CD4-positive, alpha-beta memory T cell (primary cell): ENCODE measurements at regions of chr11 and their contacts with region 1.

Region 1: DNA sequence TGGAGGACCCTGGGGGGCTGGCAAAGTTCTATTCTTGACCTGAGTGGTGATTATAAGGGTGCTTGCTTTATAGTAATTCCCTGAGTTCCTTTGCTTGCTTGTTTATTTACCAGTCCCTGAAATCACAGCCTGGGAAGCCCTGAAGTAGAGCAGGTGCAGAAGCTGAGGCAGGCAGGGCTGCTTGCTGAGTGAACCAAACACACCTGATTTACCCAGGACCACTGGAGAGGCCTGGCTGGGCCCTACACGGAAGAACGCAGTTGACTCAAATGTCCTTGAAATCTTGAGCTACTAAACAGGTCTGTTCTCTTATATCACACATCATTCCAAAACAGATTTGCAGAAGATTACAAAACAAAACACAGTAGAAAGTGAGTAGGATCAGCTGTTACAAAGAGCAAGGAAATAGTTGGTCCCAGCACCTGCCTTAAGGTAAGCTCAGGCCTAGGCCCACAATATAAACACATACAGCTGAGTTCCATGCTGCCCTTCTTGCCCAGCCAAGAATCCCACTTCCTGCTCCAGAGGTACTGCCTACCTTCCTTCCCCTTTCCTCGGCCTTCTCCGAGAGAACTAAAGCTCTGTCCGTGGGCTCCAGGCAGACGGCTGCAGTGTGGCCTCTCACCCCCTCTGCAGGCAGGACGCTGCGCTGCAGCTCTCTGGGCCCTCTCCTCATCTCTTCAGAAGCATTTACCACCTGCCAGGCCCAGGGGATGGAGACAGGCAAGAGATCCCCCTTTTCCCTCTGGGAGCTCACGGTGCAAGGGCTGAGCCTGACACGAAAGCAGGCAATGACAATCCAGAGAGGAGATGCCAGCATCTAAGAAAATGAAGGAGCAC is 46.1 kb upstream of the SCUBE2 start:
- DNase-seq: peak; percentile 51 to 54 (median 54)
- H3K4me3 ChIP-seq: no peak overlapping the region
- H3K4me3 Mint-ChIP-seq: peak overlapping the region in 6 of 8 donors; percentile 50 to 80 (median 54)
- H3K27ac ChIP-seq: no peak overlapping the region
- H3K27ac Mint-ChIP-seq: peak overlapping the region in 6 of 7 donors; percentile 15 to 90 (median 64)
- H3K4me1 ChIP-seq: peaks cover 26% of the 10 kb centered on the region
- H3K4me1 Mint-ChIP-seq: peaks cover 11 to 36% (median 21%) of the 10 kb centered on the region in 4 donors
- H3K27me3 ChIP-seq: no peaks in the 10 kb centered on the region
- H3K27me3 Mint-ChIP-seq: no peaks in the 10 kb centered on the region

Region 2: DNA sequence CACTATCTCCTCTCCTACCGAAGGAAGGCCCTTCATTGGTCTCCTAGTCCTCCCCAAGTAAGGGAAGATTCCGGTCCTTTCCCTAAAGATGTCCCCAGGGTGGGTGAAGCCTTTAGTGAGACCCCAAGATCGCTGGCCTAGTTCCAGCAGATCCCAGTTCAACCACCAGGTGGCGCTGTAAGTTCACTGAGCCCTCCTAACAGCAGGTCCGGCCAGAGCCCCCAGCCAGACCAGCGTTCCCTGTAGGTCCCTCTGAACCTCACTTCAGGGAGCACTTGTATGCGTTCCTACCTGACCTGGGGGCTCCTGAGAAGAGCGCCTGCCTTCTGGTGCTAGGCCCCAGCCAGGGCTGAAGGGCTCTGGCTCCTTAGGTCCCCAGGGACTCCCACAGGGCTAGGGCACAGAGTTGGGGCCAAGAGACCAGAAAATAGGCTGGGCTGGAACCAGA is 911.9 kb before region 1 on chr11:
- CTCF ChIA-PET with region 1: no interaction called
- POLR2A ChIA-PET with region 1: no interaction called
- intact Hi-C with region 1: loop called (anchors 5 kb)
- DNase-seq: peak in 4 of 5 donors; percentile 35 to 52 (median 36)
- H3K4me3 ChIP-seq: no peak overlapping the region
- H3K4me3 Mint-ChIP-seq: no peak overlapping the region
- H3K27ac ChIP-seq: no peak overlapping the region
- H3K27ac Mint-ChIP-seq: no peak overlapping the region
- H3K4me1 ChIP-seq: no peaks in the 10 kb centered on the region
- H3K4me1 Mint-ChIP-seq: peaks cover 0 to 2% (median under 1%) of the 10 kb centered on the region in 4 donors
- H3K27me3 ChIP-seq: no peaks in the 10 kb centered on the region
- H3K27me3 Mint-ChIP-seq: peaks cover 0 to 4% of the 10 kb centered on the region in 2 donors

Region 3: GRCh38 chr11:8911029-8911826 is 226.3 kb before region 1 on chr11 and contains the start of gene AKIP1:
- CTCF ChIA-PET with region 1: interaction called, 26 read pairs
- POLR2A ChIA-PET with region 1: no interaction called
- intact Hi-C with region 1: loop called (anchors 1 kb)
- DNase-seq: peak; percentile 63 to 78 (median 65)
- H3K4me3 ChIP-seq: peak within 1 kb of the TSS; percentile 76 to 79
- H3K4me3 Mint-ChIP-seq: peak within 1 kb of the TSS; percentile 91 to 97 (median 92)
- H3K27ac ChIP-seq: peak within 1 kb of the TSS; percentile 52
- H3K27ac Mint-ChIP-seq: peak within 1 kb of the TSS; percentile 57 to 94 (median 89)
- H3K4me1 ChIP-seq: peaks cover 38% of the 10 kb centered on the region
- H3K4me1 Mint-ChIP-seq: peaks cover 27 to 60% (median 41%) of the 10 kb centered on the region in 4 donors
- H3K27me3 ChIP-seq: no peaks in the 10 kb centered on the region
- H3K27me3 Mint-ChIP-seq: no peaks in the 10 kb centered on the region
- total RNA-seq, gene AKIP1: 13.3 to 14.5 TPM

Region 4: GRCh38 chr11:9015677-9016076 is 121.8 kb before region 1 on chr11:
- CTCF ChIA-PET with region 1: interaction called, 187 read pairs
- POLR2A ChIA-PET with region 1: interaction called, 6 read pairs
- intact Hi-C with region 1: loop called (anchors 1 kb)
- DNase-seq: peak; percentile 51 to 59 (median 55)
- H3K4me3 ChIP-seq: no peak overlapping the region
- H3K4me3 Mint-ChIP-seq: no peak overlapping the region
- H3K27ac ChIP-seq: no peak overlapping the region
- H3K27ac Mint-ChIP-seq: no peak overlapping the region
- H3K4me1 ChIP-seq: peaks cover 20% of the 10 kb centered on the region
- H3K4me1 Mint-ChIP-seq: peaks cover 18 to 37% (median 25%) of the 10 kb centered on the region in 4 donors
- H3K27me3 ChIP-seq: no peaks in the 10 kb centered on the region
- H3K27me3 Mint-ChIP-seq: peaks cover 0 to 2% of the 10 kb centered on the region in 2 donors

Region 5: GRCh38 chr11:9069256-9069655 is 68.3 kb before region 1 on chr11:
- CTCF ChIA-PET with region 1: no interaction called
- POLR2A ChIA-PET with region 1: no interaction called
- intact Hi-C with region 1: no loop called
- DNase-seq: no peak
- H3K4me3 ChIP-seq: no peak overlapping the region
- H3K4me3 Mint-ChIP-seq: no peak overlapping the region
- H3K27ac ChIP-seq: no peak overlapping the region
- H3K27ac Mint-ChIP-seq: no peak overlapping the region
- H3K4me1 ChIP-seq: no peaks in the 10 kb centered on the region
- H3K4me1 Mint-ChIP-seq: no peaks in the 10 kb centered on the region
- H3K27me3 ChIP-seq: no peaks in the 10 kb centered on the region
- H3K27me3 Mint-ChIP-seq: peaks cover 8 to 10% of the 10 kb centered on the region in 2 donors

Region 6: DNA sequence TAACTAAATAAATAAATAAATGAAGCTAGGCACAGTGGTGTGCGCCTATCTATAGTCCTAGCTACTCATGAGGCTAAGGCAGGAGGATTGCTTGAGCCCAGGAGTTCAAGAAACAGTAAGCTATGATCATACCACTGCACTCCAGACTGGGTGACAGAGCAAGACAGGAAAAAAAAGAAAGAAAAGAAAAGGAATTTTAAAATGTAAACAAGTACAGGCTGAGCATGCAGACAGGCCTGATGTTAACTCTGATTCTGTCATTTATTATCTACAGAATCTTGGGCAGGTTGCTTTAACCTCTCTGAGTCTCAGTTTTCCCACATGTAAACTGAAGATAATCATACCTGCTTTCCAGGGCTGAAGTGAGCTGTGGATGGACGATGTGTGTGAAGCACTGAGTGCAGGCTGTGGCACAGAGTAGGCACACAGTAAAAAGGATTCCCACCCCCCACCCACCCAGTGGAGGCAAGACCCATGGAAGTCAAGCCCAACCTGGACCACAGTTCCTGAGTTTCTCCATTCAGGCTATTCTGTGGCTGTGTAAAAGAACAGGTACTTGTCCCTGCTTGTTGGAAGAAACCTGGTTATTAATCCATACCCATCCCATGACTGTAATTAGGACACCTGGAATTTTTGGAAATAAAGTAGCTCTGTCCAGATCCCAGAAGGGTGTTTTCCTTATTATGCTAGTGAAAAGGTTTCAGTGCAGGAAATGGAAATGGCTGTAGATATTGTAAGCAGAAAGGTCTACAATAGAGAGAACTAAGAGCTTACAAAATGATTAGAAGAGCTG is 27.4 kb before region 1 on chr11:
- CTCF ChIA-PET with region 1: interaction called, 11 read pairs
- POLR2A ChIA-PET with region 1: no interaction called
- intact Hi-C with region 1: no loop called
- DNase-seq: no peak
- H3K4me3 ChIP-seq: no peak overlapping the region
- H3K4me3 Mint-ChIP-seq: no peak overlapping the region
- H3K27ac ChIP-seq: no peak overlapping the region
- H3K27ac Mint-ChIP-seq: no peak overlapping the region
- H3K4me1 ChIP-seq: no peaks in the 10 kb centered on the region
- H3K4me1 Mint-ChIP-seq: no peaks in the 10 kb centered on the region
- H3K27me3 ChIP-seq: no peaks in the 10 kb centered on the region
- H3K27me3 Mint-ChIP-seq: peaks cover 0 to 2% of the 10 kb centered on the region in 2 donors

Region 7: GRCh38 chr11:9170450-9170849 is 32.9 kb after region 1 on chr11:
- CTCF ChIA-PET with region 1: interaction called, 13 read pairs
- POLR2A ChIA-PET with region 1: no interaction called
- intact Hi-C with region 1: no loop called
- DNase-seq: no peak
- H3K4me3 ChIP-seq: no peak overlapping the region
- H3K4me3 Mint-ChIP-seq: no peak overlapping the region
- H3K27ac ChIP-seq: no peak overlapping the region
- H3K27ac Mint-ChIP-seq: peak overlapping the region in 1 of 7 donors; percentile 69
- H3K4me1 ChIP-seq: no peaks in the 10 kb centered on the region
- H3K4me1 Mint-ChIP-seq: peaks cover 0 to 8% (median 4%) of the 10 kb centered on the region in 4 donors
- H3K27me3 ChIP-seq: no peaks in the 10 kb centered on the region
- H3K27me3 Mint-ChIP-seq: no peaks in the 10 kb centered on the region

Region 8: DNA sequence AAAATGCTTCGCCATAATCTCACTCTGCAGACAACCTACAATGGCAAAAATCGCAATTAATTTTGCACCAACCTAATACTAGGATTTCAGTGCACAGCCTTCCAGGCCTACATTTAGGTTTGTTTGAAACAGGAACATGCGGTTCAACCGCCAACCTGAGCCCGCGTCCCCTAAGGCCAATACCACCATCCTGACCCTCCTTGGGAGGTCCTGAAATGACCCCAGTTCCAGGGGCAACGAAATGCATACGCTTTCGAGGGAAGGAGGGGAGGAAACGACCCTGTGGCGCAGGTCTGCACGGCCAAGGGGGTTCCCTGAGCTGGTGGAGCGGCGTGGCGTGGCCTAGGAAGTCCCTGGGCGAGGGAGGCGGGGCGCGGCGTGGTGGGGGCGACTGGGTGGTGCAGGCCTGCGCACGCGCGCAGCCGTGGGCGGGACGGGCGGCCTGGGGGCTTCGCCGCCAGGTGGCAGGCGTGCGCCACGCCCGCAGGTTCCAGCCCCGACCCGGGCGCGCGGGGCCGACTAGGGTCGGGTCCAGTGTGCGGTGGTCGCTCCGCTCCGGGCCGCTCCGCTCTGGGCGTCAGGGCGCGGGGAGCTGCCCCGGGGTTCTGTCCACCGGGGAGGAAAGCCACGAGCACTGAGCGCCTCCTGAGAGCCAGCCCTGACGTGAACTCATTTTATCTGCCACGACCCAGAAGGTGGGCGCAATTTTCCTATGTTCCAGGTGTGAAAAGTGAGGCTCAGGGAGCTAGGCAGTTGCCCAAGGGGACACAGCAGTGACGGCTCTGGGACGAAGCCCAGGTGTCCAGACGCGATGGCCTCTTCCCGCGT is 620.5 kb after region 1 on chr11:
- CTCF ChIA-PET with region 1: no interaction called
- POLR2A ChIA-PET with region 1: no interaction called
- intact Hi-C with region 1: no loop called
- DNase-seq: peak; percentile 90 to 93 (median 90)
- H3K4me3 ChIP-seq: peak overlapping the region; percentile 44 to 75
- H3K4me3 Mint-ChIP-seq: peak overlapping the region; percentile 76 to 89 (median 84)
- H3K27ac ChIP-seq: peak overlapping the region; percentile 60
- H3K27ac Mint-ChIP-seq: peak overlapping the region; percentile 85 to 91 (median 89)
- H3K4me1 ChIP-seq: peaks cover 16% of the 10 kb centered on the region
- H3K4me1 Mint-ChIP-seq: peaks cover 10 to 25% (median 17%) of the 10 kb centered on the region in 4 donors
- H3K27me3 ChIP-seq: no peaks in the 10 kb centered on the region
- H3K27me3 Mint-ChIP-seq: no peaks in the 10 kb centered on the region